AG04450 (cell line): ENCODE measurements at regions of chr11 and their contacts with region 1.

Region 1: GRCh38 chr11:118621071-118621783 is 13.8 kb downstream of the PHLDB1 start:
- DNase-seq: no peak
- H3K4me3 ChIP-seq: peak overlapping the region; percentile 85
- H3K27ac ChIP-seq: peak overlapping the region; percentile 86
- H3K27me3 ChIP-seq: no peaks in the 10 kb centered on the region
- CTCF ChIP-seq: no peak

Region 2: GRCh38 chr11:118610804-118611795 is 10.1 kb before region 1 on chr11:
- CTCF ChIA-PET with region 1: interaction called, 11 read pairs
- POLR2A ChIA-PET with region 1: interaction called, 140 read pairs
- DNase-seq: no peak
- H3K4me3 ChIP-seq: peak overlapping the region; percentile 83
- H3K27ac ChIP-seq: no peak overlapping the region
- H3K27me3 ChIP-seq: no peaks in the 10 kb centered on the region
- CTCF ChIP-seq: peak; percentile 77

Region 3: DNA sequence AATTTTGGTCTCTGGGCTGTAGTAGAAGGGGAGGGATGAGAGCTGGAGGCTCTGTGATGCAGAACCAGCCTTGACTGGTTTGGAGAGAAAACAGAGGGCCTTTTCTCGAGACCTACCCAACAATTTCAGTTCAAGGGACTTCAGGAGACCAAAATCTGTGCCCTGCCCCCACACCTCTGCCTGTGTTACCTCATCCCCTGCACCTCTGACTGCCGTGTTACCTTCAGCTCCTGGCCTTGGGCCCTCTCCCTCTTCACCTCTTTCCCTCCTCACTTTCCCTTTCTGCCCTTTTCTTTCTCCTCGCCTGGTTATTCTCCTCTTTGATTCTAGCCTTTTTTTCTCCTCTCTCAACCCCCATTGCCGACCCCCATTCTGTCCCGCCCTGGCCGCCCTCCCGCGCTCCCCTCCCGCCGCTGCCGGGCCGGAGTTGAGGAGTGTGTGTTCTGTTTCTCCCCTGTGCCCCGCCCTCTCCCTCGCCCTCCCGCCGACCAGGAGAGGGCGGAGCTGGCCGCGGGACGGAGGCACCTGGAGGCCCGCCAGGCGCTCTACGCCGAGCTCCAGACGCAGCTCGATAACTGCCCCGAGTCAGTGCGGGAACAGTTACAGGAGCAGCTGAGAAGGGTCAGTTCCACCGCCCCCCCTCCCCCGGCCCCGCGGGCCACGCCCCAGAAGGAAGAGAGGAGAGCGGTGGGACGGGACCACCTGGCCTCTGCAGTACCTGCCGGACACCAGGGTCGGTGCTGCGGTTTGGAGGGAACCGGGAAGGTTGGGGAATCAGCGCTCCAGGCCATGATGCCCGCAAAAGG is 13.4 kb after region 1 on chr11:
- CTCF ChIA-PET with region 1: no interaction called
- POLR2A ChIA-PET with region 1: interaction called, 54 read pairs
- DNase-seq: no peak
- H3K4me3 ChIP-seq: no peak overlapping the region
- H3K27ac ChIP-seq: peak overlapping the region; percentile 21
- H3K27me3 ChIP-seq: no peaks in the 10 kb centered on the region
- CTCF ChIP-seq: no peak